ENCODE measurements at regions of chr1 and their contacts with region 1.

Region 1: GRCh38 chr1:27321813-27322577 is at the start of gene TMEM222:
- DNase-seq: peak; percentile 98
- H3K4me3 Mint-ChIP-seq: peak within 1 kb of the TSS; percentile 94
- H3K27ac Mint-ChIP-seq: peak within 1 kb of the TSS; percentile 86
- H3K4me1 Mint-ChIP-seq: peaks cover 45% of the 10 kb centered on the region
- H3K27me3 Mint-ChIP-seq: no peaks in the 10 kb centered on the region
- total RNA-seq, gene TMEM222: 22.0 to 22.8 TPM

Region 2: DNA sequence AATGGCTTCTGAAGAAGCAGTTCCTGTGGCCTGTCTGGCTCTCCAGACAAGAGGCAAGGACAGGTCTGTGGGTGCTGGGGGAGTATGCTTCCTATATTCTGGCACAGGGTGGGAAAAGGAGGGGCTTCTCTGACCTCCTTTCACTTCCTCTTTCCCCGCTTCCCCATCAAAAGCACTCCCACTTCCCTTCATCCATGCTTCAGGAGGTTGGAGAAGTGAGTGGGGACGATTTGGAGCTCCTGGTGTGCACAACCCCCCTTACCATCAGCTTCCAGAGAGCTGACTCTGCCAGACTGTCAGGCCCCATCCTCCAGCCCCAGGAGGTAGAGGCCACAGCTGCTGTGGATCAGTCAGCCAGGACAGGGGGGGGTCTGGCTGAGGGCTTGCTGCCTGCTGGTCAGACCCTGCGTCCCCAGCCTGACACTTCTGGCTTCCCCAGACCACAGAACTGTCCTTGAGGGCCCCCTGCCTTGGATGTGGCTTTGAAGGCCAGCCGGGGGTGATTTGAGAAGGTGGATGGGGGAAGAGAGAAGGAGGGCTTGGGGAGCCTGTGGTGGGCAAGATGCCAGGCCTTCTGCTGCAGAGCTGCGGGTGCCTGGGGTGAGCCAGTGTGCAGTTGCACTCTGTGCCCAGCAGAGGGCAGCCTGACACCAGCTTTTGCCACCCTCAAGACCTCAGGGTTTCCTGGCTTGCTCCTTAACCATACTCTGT is 21.5 kb before region 1 on chr1:
- CTCF ChIA-PET with region 1: interaction called, 31 read pairs
- intact Hi-C with region 1: no loop called
- DNase-seq: peak; percentile 84
- H3K4me3 Mint-ChIP-seq: no peak overlapping the region
- H3K27ac Mint-ChIP-seq: no peak overlapping the region
- H3K4me1 Mint-ChIP-seq: no peaks in the 10 kb centered on the region
- H3K27me3 Mint-ChIP-seq: no peaks in the 10 kb centered on the region

Region 3: DNA sequence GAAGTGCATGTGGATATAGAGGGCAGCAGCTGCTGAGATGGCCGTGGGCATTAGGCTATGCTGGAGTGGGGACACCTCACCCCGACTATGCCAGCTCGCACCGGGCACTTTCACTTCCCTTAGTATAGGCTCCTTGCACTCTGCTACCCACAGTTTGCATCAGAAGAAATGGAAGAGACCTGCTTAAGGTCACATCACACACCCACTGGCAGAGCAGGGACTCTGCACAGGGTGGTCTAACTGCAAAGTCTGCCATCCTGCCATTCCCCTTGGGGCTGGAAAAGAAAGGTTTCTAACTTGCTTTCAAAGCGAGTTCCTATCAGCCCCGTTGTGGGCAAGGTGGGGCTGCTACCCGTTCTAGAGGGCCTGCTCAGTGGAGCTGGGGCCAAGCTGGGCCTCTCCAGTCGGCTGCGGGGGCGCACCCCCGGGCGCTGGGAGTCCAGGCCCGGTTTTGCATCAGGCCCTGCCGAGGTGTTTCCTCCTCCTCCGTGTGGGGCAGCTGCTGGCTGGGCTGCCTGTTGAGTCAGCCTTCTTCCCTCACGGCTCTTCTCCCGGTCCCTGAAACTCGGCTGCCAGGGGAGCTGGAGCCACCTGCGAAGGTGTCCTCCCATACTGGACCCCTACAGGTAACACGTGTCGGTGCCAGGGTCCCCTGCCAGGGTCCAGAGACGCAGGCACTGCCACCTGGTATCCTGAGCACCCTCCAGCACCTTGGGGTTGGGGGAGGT is 19.7 kb after region 1 on chr1 and contains the start of gene SYTL1:
- CTCF ChIA-PET with region 1: interaction called, 5 read pairs
- intact Hi-C with region 1: loop called (anchors 1 kb)
- DNase-seq: peak; percentile 77
- H3K4me3 Mint-ChIP-seq: peak within 1 kb of the TSS; percentile 83
- H3K27ac Mint-ChIP-seq: peak within 1 kb of the TSS; percentile 85
- H3K4me1 Mint-ChIP-seq: peaks cover 49% of the 10 kb centered on the region
- H3K27me3 Mint-ChIP-seq: no peaks in the 10 kb centered on the region
- total RNA-seq, gene SYTL1: 28.5 to 29.2 TPM

Region 4: DNA sequence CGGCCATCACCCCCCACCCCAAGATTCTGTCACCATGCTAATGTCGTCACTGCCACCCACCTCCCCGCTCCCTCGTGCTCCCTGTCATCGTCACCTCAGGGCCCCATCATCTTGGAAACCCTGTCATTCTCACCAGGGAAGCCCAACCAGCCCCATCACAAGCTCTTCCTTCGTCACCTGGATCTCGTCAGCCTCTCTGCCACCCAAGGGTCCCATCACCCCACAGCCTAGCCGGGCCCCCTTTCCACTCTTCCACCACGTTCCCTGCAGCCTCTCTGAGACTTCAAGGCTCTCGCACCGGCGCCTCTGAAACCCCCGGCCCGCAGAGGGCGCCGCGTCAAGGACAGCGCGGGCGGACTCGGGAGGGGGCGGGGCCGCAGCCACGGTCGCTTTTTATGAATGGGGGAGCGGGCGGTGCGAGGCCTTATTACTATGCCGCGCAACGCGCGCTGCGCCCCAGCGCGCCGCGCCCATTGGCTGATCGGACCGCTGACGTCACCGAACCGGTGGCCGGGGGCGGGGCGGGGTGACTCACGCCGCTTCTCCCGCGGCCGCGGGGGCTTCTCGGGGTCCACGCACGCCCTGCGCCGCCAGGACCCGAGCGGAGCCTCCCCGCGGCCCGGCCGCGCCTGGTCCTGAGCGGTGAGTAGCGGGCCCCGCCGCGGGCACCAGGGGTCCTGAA is 70.2 kb after region 1 on chr1 and contains the start of gene GPR3:
- CTCF ChIA-PET with region 1: interaction called, 6 read pairs
- intact Hi-C with region 1: loop called (anchors 1 kb)
- DNase-seq: peak; percentile 95
- H3K4me3 Mint-ChIP-seq: peak within 1 kb of the TSS; percentile 95
- H3K27ac Mint-ChIP-seq: peak within 1 kb of the TSS; percentile 75
- H3K4me1 Mint-ChIP-seq: peaks cover 19% of the 10 kb centered on the region
- H3K27me3 Mint-ChIP-seq: no peaks in the 10 kb centered on the region
- total RNA-seq, gene GPR3: 0.64 to 0.74 TPM

Region 5: GRCh38 chr1:27405074-27405473 is 83.1 kb after region 1 on chr1:
- CTCF ChIA-PET with region 1: no interaction called
- intact Hi-C with region 1: no loop called
- DNase-seq: no peak
- H3K4me3 Mint-ChIP-seq: no peak overlapping the region
- H3K27ac Mint-ChIP-seq: no peak overlapping the region
- H3K4me1 Mint-ChIP-seq: peaks cover 19% of the 10 kb centered on the region
- H3K27me3 Mint-ChIP-seq: no peaks in the 10 kb centered on the region